Astrocyte of the cerebellum (primary cell): ENCODE measurements at regions of chr17 and their contacts with region 1.

Region 1: GRCh38 chr17:48753794-48754499 is 25.4 kb upstream of the HOXB13 start:
- DNase-seq: no peak
- H3K4me3 ChIP-seq: no peak overlapping the region
- CTCF ChIP-seq: no peak

Region 2: DNA sequence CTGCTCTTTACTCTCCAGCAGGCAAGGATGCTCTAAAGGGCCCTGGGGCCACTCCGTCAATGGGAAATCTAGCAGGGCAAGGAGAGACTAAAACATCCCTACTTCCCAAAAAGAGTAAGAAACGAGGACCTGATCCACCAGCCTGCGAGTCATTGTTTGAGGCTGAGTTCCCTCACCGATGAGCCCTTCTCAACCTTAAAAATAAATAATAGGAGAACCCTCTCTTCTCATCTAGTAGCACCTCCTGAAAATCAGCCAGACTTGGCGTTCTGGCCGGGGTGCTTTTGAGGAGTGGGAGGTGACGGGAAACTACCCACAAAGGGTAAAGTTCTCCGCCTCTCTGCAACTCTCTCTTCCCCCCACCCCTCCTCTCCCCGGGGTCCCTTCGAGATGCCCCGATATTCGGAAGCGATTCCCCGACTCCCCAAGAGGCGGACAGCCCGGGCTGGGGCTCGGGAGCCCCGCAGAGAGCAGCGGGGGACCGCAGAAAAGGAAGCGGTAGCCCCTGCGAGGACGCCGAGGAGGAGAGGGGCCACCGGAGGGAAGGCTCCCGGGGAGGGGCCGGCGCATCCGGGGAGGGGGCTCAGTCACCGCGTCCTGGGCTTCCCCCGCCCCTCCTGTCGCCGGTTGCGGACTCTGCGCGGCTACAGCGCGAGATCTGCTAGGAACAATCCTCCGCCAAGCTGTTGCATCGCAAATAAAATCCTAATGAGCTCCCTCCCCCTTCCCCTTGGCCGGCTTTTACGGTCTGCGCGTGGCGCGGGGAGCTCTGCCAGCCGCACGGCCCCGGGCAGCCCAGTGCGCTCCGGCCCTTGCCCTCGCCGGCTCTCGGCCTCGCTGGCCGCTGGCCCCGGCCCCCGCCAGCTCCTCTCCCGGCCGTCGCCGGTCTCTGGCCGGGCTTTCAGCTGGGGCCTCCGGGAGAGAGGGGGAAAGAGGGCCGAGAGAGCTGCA is 129.1 kb before region 1 on chr17:
- in situ Hi-C with region 1: loop called (anchors 5 kb)
- DNase-seq: no peak
- H3K4me3 ChIP-seq: no peak overlapping the region
- CTCF ChIP-seq: no peak

Region 3: DNA sequence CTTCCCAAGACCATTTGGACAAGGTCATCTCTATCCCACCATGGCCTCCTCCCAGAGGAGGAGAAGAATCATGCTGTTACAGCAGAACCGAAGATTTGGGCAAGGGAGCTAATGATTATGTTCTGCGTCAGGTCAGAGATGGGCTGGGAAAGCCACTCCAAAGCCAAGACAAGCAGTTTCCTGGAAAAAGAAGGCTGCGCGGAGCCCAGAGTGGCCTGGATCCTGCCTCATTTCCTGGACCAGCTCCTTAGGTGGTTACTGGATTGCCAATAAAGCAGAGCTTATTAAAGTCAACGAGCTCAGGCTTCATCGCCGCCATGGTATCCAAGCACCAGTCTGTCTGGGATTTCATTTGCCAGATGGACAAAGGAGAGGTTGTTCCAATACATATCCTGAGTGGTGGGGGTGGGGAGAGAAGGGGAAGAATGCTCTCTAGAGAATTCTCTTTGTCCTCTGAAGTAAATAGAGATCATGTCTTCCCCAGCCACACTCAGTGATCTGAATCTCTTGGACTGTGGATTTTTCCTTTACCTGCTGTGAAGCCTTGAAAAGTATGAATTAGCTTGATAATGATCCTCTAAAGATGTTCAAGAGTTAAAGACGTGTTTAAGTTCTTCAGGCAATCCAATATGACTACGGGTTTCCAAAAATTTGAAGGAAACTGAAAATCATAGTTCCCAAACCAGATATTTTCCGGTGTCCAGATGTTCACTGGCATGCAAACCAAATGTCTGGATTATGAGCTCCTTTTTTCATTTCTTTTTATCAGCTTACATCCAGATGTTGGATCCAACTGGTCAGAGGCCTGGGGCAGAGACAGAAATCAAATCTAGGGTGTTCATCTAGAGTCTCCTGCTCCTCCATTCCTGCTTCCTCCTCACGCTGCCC is 49.3 kb before region 1 on chr17:
- in situ Hi-C with region 1: no loop called
- DNase-seq: no peak
- H3K4me3 ChIP-seq: no peak overlapping the region
- CTCF ChIP-seq: no peak

Region 4: DNA sequence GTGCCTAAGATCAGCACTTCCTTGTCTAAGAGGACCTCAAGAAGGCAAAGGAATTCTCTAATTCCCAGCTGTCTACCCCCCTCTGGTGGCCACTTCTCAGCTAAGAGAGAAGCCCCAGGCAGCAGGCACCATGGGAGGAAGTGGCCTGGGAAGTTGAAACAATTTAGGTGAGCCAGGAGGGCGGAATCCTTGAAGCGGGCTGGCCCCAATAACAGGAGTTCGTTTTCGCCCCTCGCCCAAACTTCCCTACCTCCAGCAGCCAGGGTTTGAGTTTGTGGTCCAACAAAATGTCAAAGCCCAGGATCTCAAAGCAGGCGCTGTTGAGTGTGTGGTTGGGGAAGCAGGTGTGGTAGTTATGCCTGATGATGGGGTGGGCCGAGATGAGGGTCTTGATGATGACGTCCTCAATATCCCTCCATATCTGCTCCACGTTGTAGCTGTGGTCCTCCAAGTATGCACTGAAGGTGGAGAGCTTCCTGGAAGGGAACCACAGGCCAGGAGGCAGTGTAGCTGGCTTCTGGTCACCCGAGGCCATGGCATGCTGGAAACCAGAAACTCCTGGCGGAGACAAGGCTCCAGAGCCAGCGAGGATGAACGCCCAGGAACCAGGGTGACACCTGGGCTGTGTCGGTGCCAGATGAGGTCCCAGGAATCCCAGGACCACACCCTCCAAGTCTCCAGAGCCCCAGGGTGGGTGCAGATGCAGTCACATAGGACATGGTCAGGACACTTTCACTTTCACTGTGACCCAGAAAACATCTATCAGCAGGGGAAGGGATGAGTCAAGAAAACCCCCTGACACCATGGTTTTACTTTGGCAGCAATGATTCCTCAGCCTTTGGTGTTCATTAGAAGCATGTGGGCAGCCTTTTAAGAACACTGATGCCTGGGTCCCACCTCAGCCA is 37.4 kb after region 1 on chr17:
- in situ Hi-C with region 1: loop called (anchors 5 kb)
- DNase-seq: peak; percentile 64
- H3K4me3 ChIP-seq: no peak overlapping the region
- CTCF ChIP-seq: peak; percentile 86